Gastrocnemius medialis (tissue), 4 donors: ENCODE measurements at regions of chr12 and their contacts with region 1.

Region 1: DNA sequence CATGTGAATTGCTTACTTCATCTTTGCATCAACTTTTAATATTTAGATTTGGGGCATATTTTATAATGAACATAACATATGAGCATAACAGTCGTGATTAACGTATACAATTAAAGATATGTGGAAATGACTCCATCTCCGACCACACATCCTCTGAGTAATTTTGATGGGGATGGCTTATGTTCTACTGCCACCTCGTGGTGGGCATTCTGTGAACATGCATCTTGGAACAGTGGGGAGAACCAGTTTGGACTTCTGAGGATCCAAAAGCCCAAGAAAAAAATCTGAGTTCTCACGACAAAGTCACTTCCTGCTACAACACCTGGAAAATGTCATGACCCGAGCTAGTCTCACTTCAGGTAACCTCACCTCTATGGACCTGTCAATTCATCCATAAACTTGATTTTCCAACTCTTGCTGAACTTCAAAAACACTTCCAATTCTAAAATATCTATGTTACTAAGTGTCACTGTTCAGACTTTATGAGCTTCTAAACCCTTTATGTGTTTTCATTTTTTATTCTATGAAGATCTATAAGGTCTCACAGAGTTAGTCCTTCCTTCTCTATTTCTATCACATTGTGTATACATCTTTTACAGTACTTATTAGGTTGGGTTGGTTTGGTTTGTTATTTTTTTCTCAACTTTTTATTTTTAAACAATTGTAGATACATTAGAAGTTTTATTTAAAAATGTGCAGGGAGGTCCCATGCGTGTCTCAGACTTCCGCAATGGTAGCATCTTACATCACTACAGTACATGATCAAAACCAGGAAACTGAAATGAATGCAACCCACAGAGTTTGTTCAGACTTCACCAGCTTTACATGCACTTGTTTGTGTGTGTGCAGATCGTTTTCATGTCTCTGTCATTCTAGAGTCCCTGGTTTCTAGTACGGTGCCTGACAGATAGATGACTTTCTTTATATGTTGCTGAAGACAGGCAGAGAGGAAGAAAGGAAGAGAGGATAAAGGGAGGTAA is 38.2 kb upstream of the STAB2 start:
- DNase-seq: peak in 1 of 2 donors; percentile 17
- ATAC-seq: no peak
- H3K4me3 ChIP-seq: no peak overlapping the region
- H3K27ac ChIP-seq: no peak overlapping the region
- H3K4me1 ChIP-seq: no peaks in the 10 kb centered on the region
- H3K27me3 ChIP-seq: peaks cover 0 to 2% (median 0%) of the 10 kb centered on the region in 3 donors
- CTCF ChIP-seq: peak in 4 of 5 experiments; percentile 34 to 71 (median 54)
- POLR2A ChIP-seq: no peak

Region 2: GRCh38 chr12:102883204-102883799 is 665.6 kb before region 1 on chr12:
- in situ Hi-C with region 1: loop called in 1 of 4 experiments (anchors 5 kb)
- intact Hi-C with region 1: loop called (anchors 2 kb)
- DNase-seq: no peak
- ATAC-seq: no peak
- H3K4me3 ChIP-seq: no peak overlapping the region
- H3K27ac ChIP-seq: no peak overlapping the region
- H3K4me1 ChIP-seq: no peaks in the 10 kb centered on the region
- H3K27me3 ChIP-seq: no peaks in the 10 kb centered on the region
- CTCF ChIP-seq: peak in 3 of 5 experiments; percentile 33 to 56 (median 41)
- POLR2A ChIP-seq: no peak